ENCODE measurements at regions of chr20 and their contacts with region 1.

Region 1: GRCh38 chr20:46752728-46753127 is 43.3 kb downstream of the SLC2A10 start:
- DNase-seq: peak; percentile 56
- CTCF ChIP-seq: peak; percentile 55

Region 2: DNA sequence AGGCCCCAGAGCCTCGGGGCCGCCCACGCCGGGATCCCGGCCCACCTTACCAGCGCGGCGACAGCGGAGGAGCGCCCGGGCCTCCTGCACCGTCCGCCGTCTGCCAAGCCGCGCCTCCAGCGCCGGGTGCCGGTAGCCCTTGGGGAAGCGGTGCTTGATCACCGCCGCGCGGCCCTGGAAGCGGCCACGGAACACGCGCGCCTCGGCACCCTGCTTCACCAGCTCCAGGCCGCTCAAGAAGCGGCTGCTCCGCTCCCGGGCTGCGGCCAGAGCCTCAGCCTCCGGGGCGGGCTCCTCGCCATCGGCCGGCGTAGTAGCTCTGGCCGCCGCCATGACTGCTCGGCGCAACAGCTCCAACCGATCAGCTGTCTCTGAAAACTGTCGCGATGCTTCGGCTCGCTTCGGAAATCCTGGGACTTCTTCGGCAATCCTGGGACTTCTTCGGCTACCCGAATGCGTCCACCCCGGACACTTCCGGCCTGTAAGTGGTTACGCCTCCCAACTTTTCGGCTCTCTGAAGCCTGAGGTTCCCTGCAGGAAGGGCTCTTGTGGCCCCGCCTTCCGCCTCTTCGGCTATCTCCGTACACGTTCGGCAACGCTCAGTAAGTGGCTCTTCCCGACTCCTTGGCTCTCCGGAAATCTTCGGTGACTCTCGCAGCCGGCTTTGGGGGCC is 63.5 kb before region 1 on chr20 and contains the start of gene TP53RK:
- CTCF ChIA-PET with region 1: no interaction called
- POLR2A ChIA-PET with region 1: no interaction called
- DNase-seq: peak; percentile 99
- CTCF ChIP-seq: no peak

Region 3: GRCh38 chr20:46709459-46710152 is 43.1 kb before region 1 on chr20 and contains the start of gene SLC2A10:
- CTCF ChIA-PET with region 1: no interaction called
- POLR2A ChIA-PET with region 1: no interaction called
- DNase-seq: no peak
- CTCF ChIP-seq: no peak

Region 4: DNA sequence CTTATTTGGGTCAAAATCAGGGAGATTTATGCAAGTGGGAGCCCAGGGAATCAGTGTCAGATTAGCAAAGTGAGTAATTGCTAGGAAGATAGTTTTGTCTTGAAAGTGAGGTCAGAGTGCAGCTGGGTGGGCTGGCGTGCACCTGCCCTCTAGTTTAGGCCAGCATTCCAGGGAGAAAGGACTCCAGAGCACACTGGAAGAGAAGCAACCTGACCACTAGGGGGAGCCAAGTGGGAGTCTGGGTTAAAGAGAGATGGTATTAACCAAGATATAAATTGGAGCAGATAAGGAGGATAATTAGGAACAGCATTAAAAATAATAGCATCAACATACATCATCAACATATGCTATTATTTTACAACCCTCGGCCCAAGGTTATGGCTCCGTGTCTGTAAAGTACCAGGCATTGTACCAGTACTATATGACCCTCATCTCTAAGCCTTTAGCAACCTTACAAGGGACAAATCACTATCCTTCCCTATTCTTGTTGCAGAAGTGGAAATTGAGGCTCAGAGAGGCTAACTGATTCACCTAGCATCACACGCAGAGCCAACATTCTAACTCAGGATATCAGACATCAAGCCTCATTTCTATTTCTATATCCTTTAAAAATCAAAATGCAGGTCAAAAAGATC is 14.5 kb after region 1 on chr20:
- CTCF ChIA-PET with region 1: interaction called, 59 read pairs
- POLR2A ChIA-PET with region 1: no interaction called
- DNase-seq: peak; percentile 39
- CTCF ChIP-seq: peak; percentile 47

Region 5: GRCh38 chr20:46772901-46773300 is 20.2 kb after region 1 on chr20:
- CTCF ChIA-PET with region 1: interaction called, 59 read pairs
- POLR2A ChIA-PET with region 1: no interaction called
- DNase-seq: no peak
- CTCF ChIP-seq: no peak

Measured in GM10248 (cell line).